Activated CD4-positive, alpha-beta memory T cell treated with anti-CD3 and anti-CD28 coated beads for 36 hours (primary cell): ENCODE measurements at regions of chr11 and their contacts with region 1.

Region 1: GRCh38 chr11:10797531-10797930 is 11.2 kb downstream of the EIF4G2 start:
- DNase-seq: no peak
- H3K4me3 Mint-ChIP-seq: no peak overlapping the region
- H3K27ac Mint-ChIP-seq: no peak overlapping the region
- H3K4me1 Mint-ChIP-seq: peaks cover 62% of the 10 kb centered on the region
- H3K27me3 Mint-ChIP-seq: peaks cover 3% of the 10 kb centered on the region

Region 2: GRCh38 chr11:10750838-10751580 is 46.5 kb before region 1 on chr11 and contains the start of gene CTR9:
- CTCF ChIA-PET with region 1: interaction called, 5 read pairs
- POLR2A ChIA-PET with region 1: interaction called, 3 read pairs
- intact Hi-C with region 1: loop called (anchors 1 kb)
- DNase-seq: peak; percentile 96
- H3K4me3 Mint-ChIP-seq: peak within 1 kb of the TSS; percentile 93
- H3K27ac Mint-ChIP-seq: peak within 1 kb of the TSS; percentile 89
- H3K4me1 Mint-ChIP-seq: peaks cover 25% of the 10 kb centered on the region
- H3K27me3 Mint-ChIP-seq: no peaks in the 10 kb centered on the region
- total RNA-seq, gene CTR9: 37.6 to 39.9 TPM